Endothelial cell of umbilical vein (primary cell): ENCODE measurements at regions of chr10 and their contacts with region 1.

Region 1: GRCh38 chr10:6171881-6172695 is 30.6 kb upstream of the PFKFB3 start:
- DNase-seq: peak; percentile 88
- H3K4me3 ChIP-seq: no peak overlapping the region
- H3K27ac ChIP-seq: peak overlapping the region; percentile 74
- H3K4me1 ChIP-seq: peaks cover 42% of the 10 kb centered on the region
- H3K27me3 ChIP-seq: no peaks in the 10 kb centered on the region
- CTCF ChIP-seq: no peak
- POLR2A ChIP-seq: no peak

Region 2: GRCh38 chr10:6144406-6145165 is 27.5 kb before region 1 on chr10:
- CTCF ChIA-PET with region 1: no interaction called
- POLR2A ChIA-PET with region 1: no interaction called
- dilution Hi-C with region 1: no loop called
- intact Hi-C with region 1: loop called (anchors 1 kb)
- DNase-seq: peak; percentile 84
- H3K4me3 ChIP-seq: peak overlapping the region; percentile 65 to 84 (median 81)
- H3K27ac ChIP-seq: peak overlapping the region; percentile 90
- H3K4me1 ChIP-seq: peaks cover 10% of the 10 kb centered on the region
- H3K27me3 ChIP-seq: no peaks in the 10 kb centered on the region
- CTCF ChIP-seq: no peak
- POLR2A ChIP-seq: peak; percentile 82

Region 3: GRCh38 chr10:6185039-6185716 is 13.1 kb after region 1 on chr10:
- CTCF ChIA-PET with region 1: interaction called, 3 read pairs
- POLR2A ChIA-PET with region 1: no interaction called
- dilution Hi-C with region 1: no loop called
- intact Hi-C with region 1: loop called (anchors 1 kb)
- DNase-seq: no peak
- H3K4me3 ChIP-seq: no peak overlapping the region
- H3K27ac ChIP-seq: no peak overlapping the region
- H3K4me1 ChIP-seq: peaks cover 17% of the 10 kb centered on the region
- H3K27me3 ChIP-seq: no peaks in the 10 kb centered on the region
- CTCF ChIP-seq: no peak
- POLR2A ChIP-seq: no peak